HEK293 (cell line): ENCODE measurements at regions of chr2 and their contacts with region 1.

Region 1: GRCh38 chr2:20291106-20291564 is 59.5 kb downstream of the PUM2 start:
- H3K4me3 ChIP-seq: no peak overlapping the region
- H3K27ac ChIP-seq: no peak overlapping the region
- H3K4me1 ChIP-seq: no peaks in the 10 kb centered on the region
- CTCF ChIP-seq: peak; percentile 77

Region 2: DNA sequence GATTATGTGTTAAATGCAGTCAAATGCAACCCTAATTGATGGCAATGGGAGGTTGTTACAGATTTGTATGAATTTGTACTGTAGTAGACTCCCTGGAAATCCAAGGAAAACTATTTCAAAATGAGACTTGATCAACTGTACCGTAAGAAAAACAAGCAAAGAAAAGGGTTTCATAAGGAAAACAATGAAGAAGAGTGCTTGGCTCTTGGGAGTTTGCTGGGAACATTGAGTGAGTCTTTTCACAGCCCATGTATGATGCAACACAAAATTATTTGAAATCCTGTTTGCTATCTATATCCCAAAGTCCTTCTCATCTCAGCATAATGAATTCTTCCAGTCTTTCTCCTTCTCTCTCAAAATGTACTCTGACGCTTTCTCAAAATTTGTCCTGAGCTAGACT is 865.7 kb before region 1 on chr2:
- CTCF ChIA-PET with region 1: no interaction called
- POLR2A ChIA-PET with region 1: no interaction called
- H3K4me3 ChIP-seq: no peak overlapping the region
- H3K27ac ChIP-seq: no peak overlapping the region
- H3K4me1 ChIP-seq: no peaks in the 10 kb centered on the region; the same call in 1 of the 2 replicates
- CTCF ChIP-seq: no peak

Region 3: DNA sequence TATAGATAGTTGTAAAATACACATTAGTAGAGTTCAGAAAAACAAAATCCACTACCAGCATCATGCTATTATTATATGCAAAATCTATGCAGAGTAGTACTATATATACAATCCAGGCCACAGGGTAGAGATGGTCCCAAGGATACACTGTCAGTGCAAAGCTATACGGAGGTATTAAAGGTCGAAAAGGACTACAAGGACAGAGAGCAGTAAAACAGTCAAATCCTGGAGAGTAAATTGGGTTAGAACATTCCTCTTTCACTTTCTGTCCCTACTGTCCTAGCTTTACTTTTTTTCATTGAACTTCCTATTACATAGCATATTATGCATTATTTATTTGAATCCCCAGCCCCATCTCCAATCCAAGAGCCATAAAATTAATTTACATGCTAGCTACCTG is 26.5 kb before region 1 on chr2:
- CTCF ChIA-PET with region 1: interaction called, 16 read pairs
- POLR2A ChIA-PET with region 1: no interaction called
- H3K4me3 ChIP-seq: no peak overlapping the region
- H3K27ac ChIP-seq: no peak overlapping the region
- H3K4me1 ChIP-seq: no peaks in the 10 kb centered on the region
- CTCF ChIP-seq: no peak

Region 4: DNA sequence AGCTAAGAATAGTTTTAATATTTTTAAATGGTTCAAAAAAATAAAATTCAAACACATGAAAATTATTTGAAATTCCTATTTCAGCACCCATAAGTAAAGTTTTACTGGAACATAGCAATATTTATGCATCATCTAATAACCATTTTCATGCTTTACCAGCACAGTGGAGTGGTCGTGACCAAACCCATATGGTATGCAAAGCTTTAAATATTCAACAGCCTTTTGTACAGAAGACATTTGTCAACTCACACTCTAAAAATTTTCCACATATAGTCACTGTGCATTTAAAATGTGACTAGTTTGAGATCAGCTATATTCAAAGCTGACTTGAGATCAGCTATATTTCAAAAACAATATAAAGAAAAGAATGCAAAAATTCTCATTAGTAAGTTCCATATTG is 13.3 kb after region 1 on chr2:
- CTCF ChIA-PET with region 1: interaction called, 24 read pairs
- POLR2A ChIA-PET with region 1: no interaction called
- H3K4me3 ChIP-seq: no peak overlapping the region
- H3K27ac ChIP-seq: no peak overlapping the region
- H3K4me1 ChIP-seq: peaks cover 8% of the 10 kb centered on the region; the same call in 1 of the 2 replicates
- CTCF ChIP-seq: no peak

Region 5: DNA sequence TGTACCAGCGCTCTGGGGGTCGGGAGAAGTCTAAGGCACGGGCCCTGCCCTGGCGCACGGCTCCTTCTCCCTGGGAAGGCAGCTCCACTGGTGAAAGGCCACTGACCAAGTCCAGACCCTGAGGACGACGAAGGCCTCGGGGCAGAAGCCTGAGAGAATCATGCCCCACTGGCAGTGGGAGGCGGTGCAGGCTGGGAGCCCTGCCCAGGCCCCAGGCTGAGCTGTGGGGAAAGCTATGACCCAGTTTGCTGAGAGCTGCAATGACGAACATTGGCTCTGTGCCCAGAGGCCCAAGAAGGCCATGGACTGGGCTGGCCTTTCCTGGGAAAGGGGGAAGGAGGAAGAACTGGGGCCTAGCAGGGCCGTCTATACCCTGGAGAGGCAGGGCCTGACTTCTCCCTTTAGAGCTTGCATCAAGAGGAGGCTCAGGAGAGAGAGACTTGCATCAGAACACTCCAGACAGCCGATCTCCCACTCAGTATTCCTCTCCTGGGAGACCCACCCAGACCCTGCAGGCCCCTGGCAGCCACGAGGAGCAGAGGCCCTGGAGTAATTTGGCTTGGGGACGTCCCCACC is 326.8 kb after region 1 on chr2:
- CTCF ChIA-PET with region 1: no interaction called
- POLR2A ChIA-PET with region 1: no interaction called
- H3K4me3 ChIP-seq: no peak overlapping the region
- H3K27ac ChIP-seq: no peak overlapping the region; the same call in 1 of the 2 replicates
- H3K4me1 ChIP-seq: peaks cover 7% of the 10 kb centered on the region; the same call in 1 of the 2 replicates
- CTCF ChIP-seq: 0 out of 2 replicates have a peak, but pooled peaks have one; percentile 27